HEK293T (cell line): ENCODE measurements at regions of chr1 and their contacts with region 1.

Region 1: DNA sequence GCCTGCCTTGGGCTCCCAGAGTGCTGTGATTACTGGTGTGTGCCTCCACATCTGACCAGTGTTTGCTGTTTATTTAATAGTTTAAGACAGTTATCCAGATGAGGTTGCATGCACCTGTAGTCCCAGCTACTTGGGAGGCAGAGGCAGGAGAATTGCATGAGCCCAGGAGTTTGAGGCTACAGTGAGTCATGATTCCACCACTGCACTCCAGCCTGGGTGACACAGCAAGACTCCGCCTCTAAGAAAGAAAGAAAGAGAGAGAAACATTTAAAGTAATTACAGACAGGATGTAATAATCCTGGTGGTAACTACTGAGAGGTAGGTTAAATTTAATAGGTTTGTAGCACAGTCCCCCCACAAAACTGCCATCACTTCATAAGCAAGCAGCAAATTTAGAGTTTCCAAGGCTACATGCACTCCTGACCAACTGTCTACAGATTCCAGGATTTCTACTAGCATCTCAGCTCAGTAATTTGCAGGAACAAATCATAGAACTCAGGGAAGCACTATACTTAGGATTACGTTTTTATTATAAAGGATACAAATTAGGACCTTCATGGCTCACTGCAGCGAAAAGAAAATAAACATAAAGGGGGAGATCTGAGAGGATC is 89.6 kb downstream of the PKN2 start:
- DNase-seq: no peak

Region 2: GRCh38 chr1:86906419-86906818 is 1867.2 kb before region 1 on chr1:
- CTCF ChIA-PET with region 1: interaction called, 14 read pairs
- POLR2A ChIA-PET with region 1: no interaction called
- DNase-seq: peak; percentile 16